ENCODE measurements at regions of chr17 and their contacts with region 1.

Region 1: DNA sequence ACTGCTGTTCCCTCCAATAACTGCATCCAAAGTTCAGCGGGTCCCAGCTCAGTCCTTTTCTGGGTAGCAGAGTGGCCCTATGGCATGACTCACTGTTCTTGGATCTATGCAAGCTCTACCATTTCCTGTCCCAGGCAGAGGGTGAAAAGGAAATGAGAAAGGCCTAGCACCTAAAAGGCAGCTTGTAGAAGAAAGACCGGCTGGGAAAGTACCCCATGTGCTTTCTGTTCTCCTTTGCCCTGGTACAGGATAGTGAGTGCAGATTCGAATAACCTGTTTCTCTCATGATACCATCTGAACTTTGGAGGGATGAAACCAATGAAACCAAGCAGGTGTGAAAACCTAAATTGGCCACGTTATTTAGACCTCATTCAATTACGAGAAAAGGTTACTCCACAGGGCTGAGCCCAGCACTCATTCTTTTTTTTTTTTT is 12.7 kb upstream of the HASPIN start:
- DNase-seq: no peak
- ATAC-seq: no peak; the same call in 1 of the 2 replicates
- H3K4me3 Mint-ChIP-seq: no peak overlapping the region
- H3K27ac Mint-ChIP-seq: no peak overlapping the region
- H3K4me1 Mint-ChIP-seq: no peaks in the 10 kb centered on the region
- H3K27me3 Mint-ChIP-seq: no peaks in the 10 kb centered on the region
- CTCF ChIP-seq: no peak

Region 2: DNA sequence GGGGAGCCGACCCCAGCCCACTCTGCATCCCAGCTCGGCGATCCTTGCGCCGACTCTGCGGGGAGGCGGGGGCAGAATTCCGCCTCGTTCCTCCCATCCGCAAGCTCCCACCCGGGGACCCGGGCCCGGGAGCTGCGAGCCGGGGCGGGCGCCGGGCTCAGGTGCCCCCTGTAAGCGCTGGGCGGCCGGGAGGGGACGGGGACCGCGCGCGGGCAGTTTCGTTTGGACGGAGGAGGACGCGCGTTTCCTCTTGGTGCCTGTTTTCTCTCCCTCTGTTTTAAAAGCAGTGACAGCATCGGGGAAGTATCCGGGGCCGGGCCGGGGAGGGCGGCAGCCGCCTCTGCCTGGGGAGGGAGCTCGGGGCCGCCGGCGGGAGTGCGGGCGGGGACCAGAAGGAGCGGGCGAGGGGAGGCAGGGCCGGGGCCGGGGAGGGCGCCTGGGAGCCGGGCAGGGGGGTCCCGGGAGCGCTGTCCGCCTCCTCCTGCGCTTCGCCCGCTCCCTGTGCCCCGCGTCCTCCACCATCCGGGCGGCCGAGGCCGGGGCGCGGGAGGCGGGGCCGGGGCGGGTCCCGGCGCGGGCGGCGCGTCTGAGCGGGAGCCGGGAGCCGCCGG is 857.8 kb before region 1 on chr17:
- CTCF ChIA-PET with region 1: no interaction called
- POLR2A ChIA-PET with region 1: interaction called, 10 read pairs
- DNase-seq: peak; percentile 71
- ATAC-seq: peak; percentile 3
- H3K4me3 Mint-ChIP-seq: peak overlapping the region; percentile 51
- H3K27ac Mint-ChIP-seq: no peak overlapping the region
- H3K4me1 Mint-ChIP-seq: peaks cover 46% of the 10 kb centered on the region
- H3K27me3 Mint-ChIP-seq: no peaks in the 10 kb centered on the region
- CTCF ChIP-seq: no peak

Region 3: GRCh38 chr17:3535253-3535995 is 175.5 kb before region 1 on chr17:
- CTCF ChIA-PET with region 1: no interaction called
- POLR2A ChIA-PET with region 1: no interaction called
- DNase-seq: peak; percentile 81
- ATAC-seq: peak; percentile 88
- H3K4me3 Mint-ChIP-seq: peak overlapping the region; percentile 67
- H3K27ac Mint-ChIP-seq: no peak overlapping the region
- H3K4me1 Mint-ChIP-seq: peaks cover 15% of the 10 kb centered on the region
- H3K27me3 Mint-ChIP-seq: peaks cover 3% of the 10 kb centered on the region; the same call in 1 of the 2 replicates
- CTCF ChIP-seq: no peak

Region 4: GRCh38 chr17:3668279-3669085 is 42.5 kb before region 1 on chr17 and contains the starts of genes EMC6 and TAX1BP3:
- CTCF ChIA-PET with region 1: no interaction called
- POLR2A ChIA-PET with region 1: no interaction called
- DNase-seq: peak; percentile 99
- ATAC-seq: peak; percentile 94
- H3K4me3 Mint-ChIP-seq: peak within 1 kb of the TSS; percentile 99
- H3K27ac Mint-ChIP-seq: peak within 1 kb of the TSS; percentile 96
- H3K4me1 Mint-ChIP-seq: peaks cover 20% of the 10 kb centered on the region
- H3K27me3 Mint-ChIP-seq: no peaks in the 10 kb centered on the region
- CTCF ChIP-seq: no peak
- total RNA-seq, gene EMC6: 81.2 to 89.7 TPM (median 86.0 TPM) in 3 replicates
- total RNA-seq, gene TAX1BP3: 71.9 to 76.9 TPM (median 76.2 TPM) in 3 replicates